Cardiac septum (tissue), 1 donor: ENCODE measurements at regions of chr7 and their contacts with region 1.

Region 1: DNA sequence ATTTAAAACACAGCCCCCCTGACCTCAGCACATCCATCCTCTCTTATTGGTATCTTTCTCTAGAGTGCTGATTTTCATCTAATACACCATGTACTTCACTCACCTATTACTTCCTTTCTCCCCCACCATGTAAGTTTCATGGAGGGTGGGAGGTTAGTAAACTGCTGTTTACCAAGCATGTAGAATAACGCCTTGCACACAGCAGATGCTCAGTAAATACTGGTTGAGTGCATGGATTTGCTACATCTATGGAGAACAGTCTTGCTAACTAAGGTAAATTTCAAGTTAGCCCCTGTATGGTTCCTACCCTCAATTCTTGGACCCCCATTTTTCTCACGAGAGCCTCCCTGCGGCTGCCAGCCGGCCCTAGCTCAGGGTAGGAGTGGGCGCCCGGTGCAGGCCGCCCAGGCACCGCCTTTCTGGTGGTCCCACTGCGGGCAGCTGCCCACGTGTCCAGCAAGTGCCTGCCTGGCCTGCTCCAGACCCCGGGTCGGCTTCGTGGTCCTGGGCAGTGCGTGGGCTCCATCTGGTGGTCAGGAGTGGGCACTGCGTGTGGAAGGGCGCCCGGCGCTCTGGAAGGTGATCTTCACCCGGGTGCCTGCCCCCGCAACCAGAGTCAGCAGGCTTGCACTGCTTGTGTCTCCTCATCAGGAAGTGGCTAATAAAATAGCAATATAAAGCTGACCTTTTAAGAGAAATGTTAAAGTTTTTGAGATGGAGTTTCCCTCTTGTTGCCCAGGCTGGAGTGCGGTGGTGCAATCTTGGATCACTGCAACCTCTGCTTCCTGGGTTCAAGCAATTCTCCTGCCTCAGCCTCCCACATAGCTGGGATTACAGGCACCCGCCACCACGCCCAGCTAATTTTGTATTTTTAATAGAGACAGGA is 63.4 kb upstream of the DNAJB6 start:
- DNase-seq: peak; percentile 86

Region 2: DNA sequence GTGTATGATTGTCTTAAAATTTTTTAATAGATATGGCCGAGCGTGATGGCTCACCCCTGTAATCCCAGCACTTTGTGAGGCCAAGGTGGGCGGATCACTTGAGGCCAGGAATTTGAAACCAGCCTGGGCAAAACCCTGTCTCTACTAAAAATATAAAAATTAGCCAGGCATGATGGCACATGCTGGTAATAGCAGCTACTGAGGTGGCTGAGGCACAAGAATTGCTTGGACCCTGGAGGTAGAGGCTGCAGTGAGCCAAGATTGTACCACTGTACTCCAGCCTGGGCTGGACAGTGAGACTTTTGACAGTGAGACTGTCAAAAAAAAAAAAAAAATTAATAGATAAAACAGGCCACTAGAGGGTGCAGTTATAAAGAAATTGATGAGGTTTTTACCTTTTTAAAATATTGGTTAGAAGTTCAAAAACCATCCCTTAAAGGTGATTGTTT is 303.5 kb before region 1 on chr7:
- intact Hi-C with region 1: loop called (anchors 10 kb)
- DNase-seq: no peak

Region 3: GRCh38 chr7:157336383-157337315 is 63.2 kb after region 1 on chr7 and contains the start of gene DNAJB6:
- intact Hi-C with region 1: loop called (anchors 5 kb)
- DNase-seq: peak; percentile 97
- total RNA-seq, gene DNAJB6: 171 TPM